ENCODE measurements at regions of chr3 and their contacts with region 1.

Region 1: DNA sequence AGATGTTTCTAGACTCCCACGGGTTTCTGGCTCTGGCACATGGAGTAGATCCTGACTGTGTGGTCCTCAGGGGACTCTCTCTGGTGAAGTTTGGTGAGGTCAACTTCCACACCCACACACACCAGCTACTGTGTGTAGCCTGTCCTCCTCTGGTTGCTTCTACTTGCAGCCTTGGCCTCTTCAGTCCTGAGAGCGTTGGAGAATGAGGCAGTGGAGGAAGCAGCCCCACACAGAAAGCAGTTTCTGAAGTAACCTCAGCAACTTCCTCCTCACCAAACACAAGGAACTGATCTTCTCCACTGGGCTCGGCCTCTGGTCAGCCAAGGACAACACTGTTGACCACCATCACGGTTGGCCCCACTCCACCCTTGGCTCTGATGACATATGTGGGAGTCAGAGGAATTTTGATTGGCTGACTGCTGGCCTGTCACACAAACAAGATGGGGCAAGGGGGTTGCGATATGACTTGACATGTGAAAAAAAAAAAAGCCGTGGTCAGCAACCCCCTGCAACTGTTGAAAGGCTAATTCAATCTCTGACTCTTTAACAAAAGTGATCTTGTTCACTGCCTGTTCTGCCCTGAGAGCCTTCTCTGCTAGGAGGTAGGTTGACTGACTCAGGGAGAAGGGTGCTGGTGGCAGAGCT is 19.6 kb downstream of the CD86 start:
- DNase-seq: peak; percentile 43
- H3K4me3 Mint-ChIP-seq: peak overlapping the region; percentile 71
- H3K27ac Mint-ChIP-seq: peak overlapping the region; percentile 87
- H3K4me1 Mint-ChIP-seq: peaks cover 62% of the 10 kb centered on the region
- H3K27me3 Mint-ChIP-seq: no peaks in the 10 kb centered on the region

Region 2: DNA sequence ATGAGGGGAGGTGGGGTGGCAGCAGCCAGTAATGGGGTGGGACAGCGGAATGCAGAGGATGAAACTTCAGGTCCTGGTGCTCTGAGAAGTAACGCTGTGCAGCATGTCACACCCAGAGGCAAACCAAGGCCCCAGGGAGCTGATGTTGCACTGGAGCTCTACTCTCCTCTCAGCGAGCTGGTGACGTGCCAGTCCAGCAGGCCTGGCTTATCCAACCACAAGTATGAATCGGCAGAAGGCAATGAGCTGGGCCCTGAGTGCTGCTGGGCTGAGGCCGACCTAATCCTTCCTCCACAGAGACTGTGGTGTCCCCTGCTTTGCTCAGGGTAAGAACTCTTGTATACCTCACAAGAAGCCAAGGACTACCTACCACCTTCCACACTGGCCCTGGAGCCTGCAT is 10.9 kb after region 1 on chr3:
- intact Hi-C with region 1: loop called (anchors 1 kb)
- DNase-seq: no peak
- H3K4me3 Mint-ChIP-seq: no peak overlapping the region
- H3K27ac Mint-ChIP-seq: peak overlapping the region; percentile 37
- H3K4me1 Mint-ChIP-seq: peaks cover 55% of the 10 kb centered on the region
- H3K27me3 Mint-ChIP-seq: no peaks in the 10 kb centered on the region

Measured in activated T-helper 1 cell treated with anti-CD3 and anti-CD28 coated beads, Interleukin-12 subunit alpha, Interleukin-12 subunit beta, Interleukin-2, Interleukin-4 antibody, amounts not matched to agents 30 ng/mL and 10 ng/mL and 1 ng/mL, durations not matched to agents 14 hours and 24 hours and 36 hours (primary cell).